Panc1 (cell line): ENCODE measurements at regions of chr9 and their contacts with region 1.

Region 1: DNA sequence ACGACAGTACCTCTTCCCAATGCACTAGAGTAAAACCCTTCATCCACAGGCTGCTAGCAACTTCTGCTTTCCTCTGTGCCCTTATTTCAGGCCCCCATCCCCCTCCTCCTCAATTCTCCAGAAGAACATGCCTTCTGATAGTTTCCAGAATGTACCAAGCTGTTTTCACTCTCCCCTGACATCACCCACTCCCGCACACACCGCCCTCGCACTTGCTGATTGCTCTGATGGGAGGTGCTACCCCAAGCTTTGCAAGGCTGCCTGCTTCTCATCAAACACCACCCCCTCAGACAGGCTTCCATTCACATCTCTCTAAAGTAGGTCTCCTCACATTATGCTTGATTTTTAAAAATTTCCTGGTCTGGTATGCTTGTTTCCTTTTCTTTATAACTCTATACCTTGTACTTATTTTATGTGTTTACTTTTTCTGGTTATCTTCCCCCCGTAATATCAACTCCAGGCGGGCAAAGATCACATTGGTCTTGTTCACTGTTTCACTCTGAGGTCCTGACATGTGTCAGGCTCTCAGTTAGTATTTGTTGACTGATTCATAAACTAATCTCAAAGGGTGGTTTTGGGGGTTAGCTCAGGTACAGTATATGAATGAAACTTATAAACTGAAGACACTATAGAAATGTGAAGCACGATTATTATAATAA is 91.0 kb upstream of the C9orf72 start:
- DNase-seq: no peak
- ATAC-seq: no peak
- H3K4me3 ChIP-seq: no peak overlapping the region
- H3K27ac ChIP-seq: no peak overlapping the region
- H3K4me1 ChIP-seq: no peaks in the 10 kb centered on the region
- H3K27me3 ChIP-seq: no peaks in the 10 kb centered on the region
- CTCF ChIP-seq: no peak

Region 2: DNA sequence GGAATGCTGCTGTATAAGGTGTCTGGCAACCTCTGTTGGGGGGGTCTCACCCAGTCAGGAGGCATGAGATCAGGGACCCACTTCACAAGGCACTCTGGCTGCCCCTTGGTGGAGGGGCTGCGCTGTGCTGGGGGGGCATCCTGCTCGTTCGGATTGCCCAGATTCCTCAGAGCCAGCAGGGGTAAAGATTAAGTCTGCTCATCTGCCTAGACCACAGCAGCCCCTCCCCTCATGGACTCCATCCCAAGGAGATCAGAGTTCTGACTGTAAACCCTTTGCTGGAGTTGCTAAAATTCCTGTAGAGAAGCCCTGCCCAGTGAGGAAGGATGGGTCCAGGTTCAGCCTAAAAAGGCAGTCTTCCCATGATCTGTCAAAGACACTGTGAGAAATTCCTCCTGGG is 171.0 kb after region 1 on chr9:
- CTCF ChIA-PET with region 1: no interaction called
- POLR2A ChIA-PET with region 1: no interaction called
- in situ Hi-C with region 1: no loop called
- intact Hi-C with region 1: no loop called
- DNase-seq: no peak
- ATAC-seq: no peak
- H3K4me3 ChIP-seq: no peak overlapping the region
- H3K27ac ChIP-seq: no peak overlapping the region
- H3K4me1 ChIP-seq: no peaks in the 10 kb centered on the region
- H3K27me3 ChIP-seq: no peaks in the 10 kb centered on the region
- CTCF ChIP-seq: no peak

Region 3: GRCh38 chr9:29290516-29290915 is 1626.3 kb after region 1 on chr9:
- CTCF ChIA-PET with region 1: no interaction called
- POLR2A ChIA-PET with region 1: interaction called, 13 read pairs
- in situ Hi-C with region 1: no loop called
- intact Hi-C with region 1: no loop called
- DNase-seq: no peak
- ATAC-seq: no peak
- H3K4me3 ChIP-seq: no peak overlapping the region
- H3K27ac ChIP-seq: no peak overlapping the region
- H3K4me1 ChIP-seq: no peaks in the 10 kb centered on the region
- H3K27me3 ChIP-seq: no peaks in the 10 kb centered on the region
- CTCF ChIP-seq: no peak